Right ventricle myocardium inferior (tissue), 1 donor: ENCODE measurements at regions of chr4 and their contacts with region 1.

Region 1: DNA sequence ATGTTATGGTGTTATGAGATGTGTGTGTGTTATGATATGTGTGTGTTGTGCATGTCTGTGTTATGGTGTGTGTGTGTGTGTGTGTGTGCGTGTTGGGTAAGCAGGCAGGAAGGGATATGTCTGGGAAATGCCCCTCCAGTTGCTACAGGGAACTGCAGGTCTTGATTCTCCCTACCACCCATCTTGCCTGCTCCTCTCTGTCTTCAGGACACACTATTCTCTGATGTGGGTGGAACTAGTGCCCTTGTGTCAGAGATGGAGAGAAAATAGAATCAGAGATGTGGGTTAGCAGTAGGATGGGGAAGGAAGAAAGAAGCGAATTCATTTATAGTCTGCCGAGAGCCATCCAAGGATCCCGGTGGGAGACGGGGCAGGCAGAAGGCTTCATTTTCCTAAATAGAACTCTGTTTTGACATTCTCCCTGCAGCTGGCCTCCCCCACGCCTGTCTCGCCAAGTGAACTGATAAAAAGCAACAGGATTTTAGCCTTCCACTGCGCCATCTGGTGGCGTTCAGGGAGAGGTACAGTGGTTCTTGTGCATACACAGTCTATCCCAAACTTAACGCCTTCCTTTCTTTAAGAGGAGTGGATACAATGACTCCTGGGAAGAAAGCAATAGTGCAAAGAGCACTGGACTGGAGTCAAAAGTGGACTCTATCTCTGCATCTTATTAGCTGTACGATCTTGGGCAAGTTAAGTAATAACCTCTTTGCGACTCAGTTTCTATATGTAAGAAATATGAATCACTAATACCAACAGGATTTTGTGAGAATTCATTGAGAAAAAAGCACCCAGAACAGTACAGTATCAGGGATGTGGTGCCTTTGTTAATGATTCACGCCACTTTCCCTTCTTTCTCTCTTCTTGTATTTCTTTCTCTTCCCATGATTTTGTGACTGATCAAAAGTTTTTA is 14.1 kb upstream of the MGST2 start:
- DNase-seq: peak; percentile 88
- ATAC-seq: peak; percentile 88

Region 2: GRCh38 chr4:139603576-139604387 is 47.8 kb before region 1 on chr4:
- intact Hi-C with region 1: loop called (anchors 1 kb)
- DNase-seq: no peak
- ATAC-seq: peak; percentile 52